PC-9 (cell line): ENCODE measurements at regions of chr1 and their contacts with region 1.

Region 1: DNA sequence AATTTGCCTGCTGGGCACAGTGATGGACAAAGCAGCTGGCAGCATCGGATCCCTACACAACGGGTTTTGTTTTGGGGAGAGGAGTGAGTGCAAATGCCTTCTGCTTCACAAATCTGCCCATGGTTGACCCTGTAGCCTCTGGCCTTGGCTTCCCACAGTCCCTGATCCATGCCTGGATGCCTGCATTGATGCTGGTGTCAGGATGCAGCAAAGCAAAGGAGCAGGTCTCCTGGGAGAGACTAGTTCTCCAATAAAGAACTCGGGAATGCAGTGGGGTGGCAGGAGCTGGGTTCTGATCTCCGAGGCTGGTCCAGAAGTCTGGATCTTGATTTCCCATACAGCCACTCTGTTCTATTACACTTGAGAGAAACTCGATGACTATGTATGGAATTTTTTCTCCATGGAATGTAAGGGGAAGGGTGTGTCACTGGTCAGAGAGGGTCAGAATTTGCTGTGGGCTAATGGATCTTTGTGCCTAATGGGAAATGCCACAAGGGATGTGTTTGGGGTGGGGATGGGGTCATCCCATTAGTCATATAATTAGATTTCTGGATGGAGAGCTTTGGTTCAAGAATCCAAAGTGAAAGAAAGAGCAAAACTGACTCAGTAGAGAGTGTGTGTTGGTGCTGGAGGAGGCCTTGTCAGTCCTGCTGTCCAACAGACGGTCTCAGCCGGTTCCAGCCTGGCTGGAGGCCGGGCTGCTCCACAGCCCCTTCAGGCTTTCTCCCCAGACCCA is 86.2 kb downstream of the LAMC2 start:
- DNase-seq: peak; percentile 61 to 85
- H3K4me3 ChIP-seq: no peak overlapping the region
- H3K27ac ChIP-seq: peak overlapping the region; percentile 92
- H3K4me1 ChIP-seq: peaks cover 46% of the 10 kb centered on the region
- H3K27me3 ChIP-seq: no peaks in the 10 kb centered on the region
- CTCF ChIP-seq: no peak

Region 2: DNA sequence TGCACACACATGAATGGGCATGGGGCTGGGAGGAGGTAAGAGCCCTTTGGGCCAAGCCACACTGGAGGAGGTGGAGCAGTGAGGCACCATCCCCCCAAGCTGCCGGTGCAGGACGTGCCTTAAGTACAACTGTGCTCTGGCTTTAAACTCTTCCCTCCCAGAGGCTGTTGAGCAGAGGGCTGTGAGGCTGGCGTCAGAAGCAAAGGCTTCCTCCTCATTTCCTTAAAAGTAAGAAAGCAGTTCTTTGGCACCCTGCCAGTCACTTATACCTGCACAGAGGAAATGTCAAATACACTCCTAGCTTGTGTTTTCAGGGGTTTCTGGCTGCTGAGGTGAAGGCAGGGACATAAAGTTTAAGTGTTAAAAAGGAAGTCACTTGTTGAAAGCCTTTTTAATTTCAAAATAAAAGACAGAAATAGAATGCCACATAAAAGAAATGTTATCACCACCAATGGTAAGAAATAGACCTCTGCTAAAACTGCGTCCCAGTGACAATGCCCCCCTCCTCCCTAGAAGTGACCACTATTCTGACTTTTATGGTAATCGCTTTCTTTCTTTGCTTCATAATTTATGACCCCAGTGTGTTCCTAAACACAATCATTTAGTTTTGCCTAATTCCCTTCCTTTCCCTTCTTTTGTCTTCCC is 53.1 kb before region 1 on chr1:
- CTCF ChIA-PET with region 1: no interaction called
- POLR2A ChIA-PET with region 1: interaction called, 11 read pairs
- intact Hi-C with region 1: no loop called
- DNase-seq: no peak
- H3K4me3 ChIP-seq: no peak overlapping the region
- H3K27ac ChIP-seq: no peak overlapping the region
- H3K4me1 ChIP-seq: peaks cover 9% of the 10 kb centered on the region; the same call in 1 of the 2 replicates
- H3K27me3 ChIP-seq: no peaks in the 10 kb centered on the region
- CTCF ChIP-seq: no peak